CD8-positive, alpha-beta T cell (primary cell): ENCODE measurements at regions of chr9 and their contacts with region 1.

Region 1: GRCh38 chr9:98074115-98074990 is 17.8 kb downstream of the NANS start:
- DNase-seq: peak; percentile 36 to 85 (median 71)
- ATAC-seq: peak; percentile 34
- H3K4me3 ChIP-seq: no peak overlapping the region
- H3K4me3 Mint-ChIP-seq: peak overlapping the region; percentile 69
- H3K27ac ChIP-seq: peak overlapping the region; percentile 54 to 80
- H3K27ac Mint-ChIP-seq: peak overlapping the region; percentile 97
- H3K4me1 ChIP-seq: peaks cover 31% of the 10 kb centered on the region
- H3K4me1 Mint-ChIP-seq: peaks cover 42% of the 10 kb centered on the region
- H3K27me3 ChIP-seq: no peaks in the 10 kb centered on the region
- H3K27me3 Mint-ChIP-seq: no peaks in the 10 kb centered on the region
- CTCF ChIP-seq: peak; percentile 98

Region 2: DNA sequence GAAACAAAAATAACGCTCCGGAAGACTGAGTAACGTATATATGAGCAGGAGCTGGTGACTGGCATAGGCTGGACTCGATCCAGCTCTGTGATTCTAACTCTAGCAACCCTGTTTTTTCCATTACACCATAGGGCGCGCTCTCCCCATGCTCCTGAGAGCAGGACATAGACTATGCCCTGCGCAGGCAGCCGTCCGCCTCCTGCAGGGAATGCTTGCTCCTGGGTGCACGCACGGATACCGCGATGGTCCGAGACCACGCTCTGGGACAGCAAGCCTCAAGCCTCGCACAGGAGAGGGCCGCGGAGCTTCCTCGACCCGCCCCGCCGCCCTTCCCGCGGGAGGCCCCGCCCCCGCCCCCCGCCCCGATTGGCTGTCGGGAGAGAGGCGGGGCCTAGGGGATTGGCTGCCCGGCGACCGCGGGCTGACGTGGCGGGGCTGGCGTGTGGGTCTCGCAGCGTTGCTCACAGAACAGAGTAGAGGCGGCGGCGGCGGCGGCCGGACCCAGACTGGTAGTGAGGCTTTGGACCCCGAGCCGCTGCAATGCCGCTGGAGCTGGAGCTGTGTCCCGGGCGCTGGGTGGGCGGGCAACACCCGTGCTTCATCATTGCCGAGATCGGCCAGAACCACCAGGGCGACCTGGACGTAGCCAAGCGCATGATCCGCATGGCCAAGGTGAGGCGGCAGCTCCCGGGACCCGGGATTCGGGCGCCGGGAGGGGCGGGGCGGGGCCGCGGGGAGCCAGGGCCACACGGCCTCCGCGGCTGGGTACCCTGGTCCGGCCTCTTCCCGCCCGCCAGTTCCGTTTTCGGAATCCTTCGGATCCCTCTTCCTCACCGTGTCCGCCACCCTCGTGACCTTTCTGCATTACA is 17.9 kb before region 1 on chr9 and contains the start of gene NANS:
- CTCF ChIA-PET with region 1: interaction called, 14 read pairs
- POLR2A ChIA-PET with region 1: interaction called, 3 read pairs
- intact Hi-C with region 1: loop called in 1 of 2 experiments (anchors 2 kb)
- DNase-seq: peak; percentile 78 to 93 (median 93)
- ATAC-seq: peak; percentile 94
- H3K4me3 ChIP-seq: peak within 1 kb of the TSS; percentile 58 to 83
- H3K4me3 Mint-ChIP-seq: peak within 1 kb of the TSS; percentile 96
- H3K27ac ChIP-seq: peak within 1 kb of the TSS; percentile 81 to 83
- H3K27ac Mint-ChIP-seq: peak within 1 kb of the TSS; percentile 97
- H3K4me1 ChIP-seq: peaks cover 21% of the 10 kb centered on the region
- H3K4me1 Mint-ChIP-seq: peaks cover 24% of the 10 kb centered on the region
- H3K27me3 ChIP-seq: no peaks in the 10 kb centered on the region
- H3K27me3 Mint-ChIP-seq: no peaks in the 10 kb centered on the region
- CTCF ChIP-seq: no peak
- total RNA-seq, gene NANS: 84.6 to 92.5 TPM

Region 3: DNA sequence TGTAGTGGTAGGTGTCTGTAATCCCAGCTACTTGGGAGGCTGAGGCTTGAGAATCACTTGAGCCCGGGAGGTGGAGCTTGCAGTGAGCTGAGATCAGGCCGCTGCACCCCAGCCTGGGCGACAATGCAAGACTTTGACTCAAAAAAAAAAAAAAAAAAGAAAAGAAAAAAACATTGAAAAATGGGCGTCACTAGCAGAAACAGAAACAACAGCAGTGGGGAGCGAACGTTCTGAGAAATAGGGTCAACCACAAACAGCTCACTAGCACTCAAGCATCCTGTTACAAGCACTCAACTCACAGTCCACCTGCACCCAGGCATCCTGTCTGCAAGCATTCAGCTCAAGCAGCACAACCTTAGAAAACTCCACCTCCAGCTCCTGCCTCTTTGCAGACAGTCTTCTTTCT is 27.5 kb after region 1 on chr9:
- CTCF ChIA-PET with region 1: interaction called, 29 read pairs
- POLR2A ChIA-PET with region 1: interaction called, 7 read pairs
- intact Hi-C with region 1: loop called (anchors 1 kb)
- DNase-seq: peak; percentile 64 to 97 (median 82)
- ATAC-seq: peak; percentile 95
- H3K4me3 ChIP-seq: peak overlapping the region; percentile 3 to 8
- H3K4me3 Mint-ChIP-seq: peak overlapping the region; percentile 68
- H3K27ac ChIP-seq: peak overlapping the region; percentile 33 to 76
- H3K27ac Mint-ChIP-seq: peak overlapping the region; percentile 97
- H3K4me1 ChIP-seq: peaks cover 87% of the 10 kb centered on the region
- H3K4me1 Mint-ChIP-seq: peaks cover 82% of the 10 kb centered on the region
- H3K27me3 ChIP-seq: no peaks in the 10 kb centered on the region
- H3K27me3 Mint-ChIP-seq: no peaks in the 10 kb centered on the region
- CTCF ChIP-seq: no peak

Region 4: DNA sequence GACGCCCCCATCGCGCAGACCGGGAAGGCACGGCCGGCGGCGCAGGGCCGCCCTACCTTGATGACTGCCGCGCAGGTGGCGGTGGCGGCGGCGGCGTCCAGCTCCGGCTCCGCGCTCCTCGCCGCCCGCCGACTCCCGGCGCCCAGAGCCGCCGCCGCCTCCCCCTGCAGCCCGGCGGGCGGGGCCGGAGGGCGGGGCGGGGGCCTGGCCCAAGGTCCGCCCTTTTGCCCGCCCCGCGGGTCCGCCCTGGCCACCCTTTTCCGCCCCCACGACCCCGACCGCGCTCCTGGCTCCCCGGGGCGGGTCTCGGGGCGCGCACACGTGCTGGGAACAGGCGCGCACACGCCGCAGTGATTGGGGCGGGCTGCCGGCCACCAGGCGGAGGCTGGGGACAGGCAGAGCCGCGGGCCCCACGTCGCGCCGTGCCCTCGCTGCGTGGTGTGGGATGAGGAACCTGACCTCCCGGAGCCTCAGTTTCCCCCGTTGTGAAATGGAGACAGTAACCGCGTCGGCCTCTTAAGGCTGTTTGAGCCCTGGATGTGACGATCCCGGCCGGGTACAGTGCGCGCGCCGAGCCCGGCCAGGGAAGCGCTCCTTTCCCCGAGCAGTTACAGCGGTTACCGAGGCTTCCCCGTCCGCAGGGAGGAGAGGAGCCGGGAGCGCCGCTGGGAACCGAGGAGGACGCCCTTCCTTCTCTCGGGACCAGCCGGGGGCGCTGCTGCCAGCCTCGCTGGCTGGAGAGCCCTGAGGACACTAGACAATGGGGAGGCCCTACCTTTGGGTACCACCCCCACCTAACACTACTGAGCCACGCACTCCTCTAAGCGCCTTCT is 118.4 kb after region 1 on chr9 and contains the start of gene CORO2A:
- CTCF ChIA-PET with region 1: interaction called, 16 read pairs
- POLR2A ChIA-PET with region 1: no interaction called
- intact Hi-C with region 1: loop called (anchors 1 to 2 kb)
- DNase-seq: peak; percentile 16 to 85 (median 69)
- ATAC-seq: peak; percentile 72
- H3K4me3 ChIP-seq: peak within 1 kb of the TSS; percentile 80 to 84
- H3K4me3 Mint-ChIP-seq: peak within 1 kb of the TSS; percentile 85
- H3K27ac ChIP-seq: peak within 1 kb of the TSS; percentile 39 to 42
- H3K27ac Mint-ChIP-seq: peak within 1 kb of the TSS; percentile 69
- H3K4me1 ChIP-seq: peaks cover 32% of the 10 kb centered on the region
- H3K4me1 Mint-ChIP-seq: peaks cover 40% of the 10 kb centered on the region
- H3K27me3 ChIP-seq: no peaks in the 10 kb centered on the region
- H3K27me3 Mint-ChIP-seq: no peaks in the 10 kb centered on the region
- CTCF ChIP-seq: no peak
- total RNA-seq, gene CORO2A: 6.4 to 6.7 TPM

Region 5: DNA sequence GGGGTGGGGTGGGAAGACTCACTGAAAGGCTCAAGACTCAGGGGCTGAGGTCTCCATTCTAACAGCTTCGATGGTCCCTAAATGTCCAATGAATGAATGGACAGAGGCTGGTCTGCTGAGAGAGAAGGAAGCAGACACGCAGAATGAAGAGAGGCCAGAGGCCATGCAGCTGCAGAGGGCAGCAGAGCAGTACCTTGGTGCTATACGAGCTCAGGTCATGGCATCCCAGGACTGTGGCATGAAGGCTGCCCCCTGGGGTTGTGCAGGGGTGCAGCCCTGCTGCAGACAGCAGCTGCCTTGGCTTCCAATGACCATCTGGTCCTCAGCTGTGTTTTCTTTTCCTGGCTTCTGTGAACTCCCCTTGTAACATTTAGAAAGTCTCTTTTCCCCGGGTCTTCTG is 133.3 kb after region 1 on chr9:
- CTCF ChIA-PET with region 1: interaction called, 34 read pairs
- POLR2A ChIA-PET with region 1: no interaction called
- intact Hi-C with region 1: loop called (anchors 1 kb)
- DNase-seq: no peak
- ATAC-seq: no peak
- H3K4me3 ChIP-seq: no peak overlapping the region
- H3K4me3 Mint-ChIP-seq: no peak overlapping the region
- H3K27ac ChIP-seq: no peak overlapping the region
- H3K27ac Mint-ChIP-seq: no peak overlapping the region
- H3K4me1 ChIP-seq: no peaks in the 10 kb centered on the region
- H3K4me1 Mint-ChIP-seq: peaks cover 5% of the 10 kb centered on the region
- H3K27me3 ChIP-seq: no peaks in the 10 kb centered on the region
- H3K27me3 Mint-ChIP-seq: no peaks in the 10 kb centered on the region
- CTCF ChIP-seq: no peak

Region 6: DNA sequence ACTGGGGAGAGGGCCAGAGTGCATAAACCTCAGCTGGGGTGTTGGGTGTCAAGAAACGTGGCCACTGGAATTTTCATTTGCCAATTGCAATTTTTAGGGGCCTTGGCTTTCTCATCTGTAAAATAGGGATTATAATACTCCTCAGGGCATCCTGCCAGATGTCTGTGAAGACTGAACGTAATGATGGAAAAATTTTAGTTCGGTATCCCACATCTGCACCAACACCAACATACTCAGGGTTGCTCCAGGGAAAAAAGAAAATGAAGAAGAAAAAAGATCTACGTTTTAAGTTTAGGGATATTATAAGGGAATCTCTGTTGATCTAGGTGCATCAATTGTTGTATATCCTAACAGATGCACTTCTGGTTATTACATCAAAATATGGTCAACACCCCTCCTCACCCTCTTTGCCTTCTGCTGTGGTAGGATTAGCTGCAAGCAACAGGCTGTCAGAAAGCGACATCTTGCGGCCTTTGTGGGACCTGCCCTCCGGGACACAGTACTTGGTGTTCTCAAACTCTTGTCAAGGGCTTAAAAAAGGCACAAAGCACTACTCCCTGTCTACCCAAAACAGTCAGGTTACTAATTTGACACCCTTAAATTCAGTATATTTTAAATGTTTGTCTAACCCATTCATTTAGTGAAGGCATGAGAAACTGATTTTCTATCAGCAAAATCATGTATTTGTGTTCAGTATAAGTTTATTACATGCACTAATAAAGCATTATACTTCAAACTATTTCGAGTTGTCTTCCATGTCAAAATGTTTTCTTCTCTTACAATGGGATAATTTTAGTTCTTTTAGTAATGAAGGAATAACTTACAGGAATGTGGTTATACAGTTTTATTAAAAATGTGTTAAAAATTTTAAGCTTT is 189.4 kb after region 1 on chr9:
- CTCF ChIA-PET with region 1: interaction called, 45 read pairs
- POLR2A ChIA-PET with region 1: no interaction called
- intact Hi-C with region 1: loop called (anchors 1 kb)
- DNase-seq: peak; percentile 70 to 87 (median 84)
- ATAC-seq: peak; percentile 100
- H3K4me3 ChIP-seq: no peak overlapping the region
- H3K4me3 Mint-ChIP-seq: no peak overlapping the region
- H3K27ac ChIP-seq: no peak overlapping the region
- H3K27ac Mint-ChIP-seq: no peak overlapping the region
- H3K4me1 ChIP-seq: no peaks in the 10 kb centered on the region
- H3K4me1 Mint-ChIP-seq: peaks cover 2% of the 10 kb centered on the region
- H3K27me3 ChIP-seq: no peaks in the 10 kb centered on the region
- H3K27me3 Mint-ChIP-seq: no peaks in the 10 kb centered on the region
- CTCF ChIP-seq: peak; percentile 92

Region 7: DNA sequence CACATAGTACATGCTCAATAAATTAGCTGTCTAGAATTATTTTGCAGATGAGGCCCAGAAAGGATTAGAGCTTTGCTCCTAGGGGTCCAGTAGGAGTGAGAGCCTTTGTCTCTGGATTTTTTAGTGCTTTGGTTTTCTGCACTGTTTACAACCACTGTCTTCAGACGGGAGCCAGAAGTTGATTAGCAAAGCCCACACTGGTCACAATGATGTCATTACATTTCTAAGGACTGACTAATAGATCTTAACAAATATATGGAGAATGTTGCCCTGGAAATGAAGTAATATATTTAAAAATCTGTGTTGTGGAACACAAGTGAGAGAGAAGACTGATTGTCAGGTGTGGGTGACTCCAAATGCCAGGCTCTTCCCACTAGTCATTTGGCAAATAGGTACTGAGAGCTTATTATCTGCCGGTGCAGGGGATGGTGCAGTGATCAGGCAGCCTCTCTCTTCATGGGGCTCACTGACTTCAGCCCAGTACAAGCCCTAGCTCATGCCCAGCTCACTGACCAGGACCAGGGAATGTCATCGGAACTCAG is 945.5 kb after region 1 on chr9:
- CTCF ChIA-PET with region 1: no interaction called
- POLR2A ChIA-PET with region 1: no interaction called
- intact Hi-C with region 1: no loop called
- DNase-seq: no peak
- ATAC-seq: no peak
- H3K4me3 ChIP-seq: no peak overlapping the region
- H3K4me3 Mint-ChIP-seq: no peak overlapping the region
- H3K27ac ChIP-seq: no peak overlapping the region
- H3K27ac Mint-ChIP-seq: no peak overlapping the region
- H3K4me1 ChIP-seq: no peaks in the 10 kb centered on the region
- H3K4me1 Mint-ChIP-seq: peaks cover 18% of the 10 kb centered on the region
- H3K27me3 ChIP-seq: no peaks in the 10 kb centered on the region
- H3K27me3 Mint-ChIP-seq: no peaks in the 10 kb centered on the region
- CTCF ChIP-seq: no peak